Left lung (tissue), 14 donors: ENCODE measurements at regions of chr2 and their contacts with region 1.

Region 1: GRCh38 chr2:70789304-70790135 is 923 bp downstream of the FIGLA start:
- DNase-seq: peak; percentile 59 to 81 (median 66)
- ATAC-seq: peak; percentile 95
- H3K4me3 ChIP-seq: no peak overlapping the region
- H3K27ac ChIP-seq: no peak overlapping the region
- H3K4me1 ChIP-seq: peaks cover 0 to 23% of the 10 kb centered on the region in 2 donors
- H3K27me3 ChIP-seq: peaks cover 47 to 71% of the 10 kb centered on the region in 2 donors
- CTCF ChIP-seq: peak; percentile 30 to 49

Region 2: GRCh38 chr2:70472221-70472890 is 317.2 kb before region 1 on chr2:
- intact Hi-C with region 1: no loop called
- DNase-seq: peak in 1 of 4 donors; percentile 11
- ATAC-seq: peak; percentile 30
- H3K4me3 ChIP-seq: no peak overlapping the region
- H3K27ac ChIP-seq: no peak overlapping the region
- H3K4me1 ChIP-seq: peaks cover 0 to 27% of the 10 kb centered on the region in 2 donors
- H3K27me3 ChIP-seq: no peaks in the 10 kb centered on the region
- CTCF ChIP-seq: no peak

Region 3: DNA sequence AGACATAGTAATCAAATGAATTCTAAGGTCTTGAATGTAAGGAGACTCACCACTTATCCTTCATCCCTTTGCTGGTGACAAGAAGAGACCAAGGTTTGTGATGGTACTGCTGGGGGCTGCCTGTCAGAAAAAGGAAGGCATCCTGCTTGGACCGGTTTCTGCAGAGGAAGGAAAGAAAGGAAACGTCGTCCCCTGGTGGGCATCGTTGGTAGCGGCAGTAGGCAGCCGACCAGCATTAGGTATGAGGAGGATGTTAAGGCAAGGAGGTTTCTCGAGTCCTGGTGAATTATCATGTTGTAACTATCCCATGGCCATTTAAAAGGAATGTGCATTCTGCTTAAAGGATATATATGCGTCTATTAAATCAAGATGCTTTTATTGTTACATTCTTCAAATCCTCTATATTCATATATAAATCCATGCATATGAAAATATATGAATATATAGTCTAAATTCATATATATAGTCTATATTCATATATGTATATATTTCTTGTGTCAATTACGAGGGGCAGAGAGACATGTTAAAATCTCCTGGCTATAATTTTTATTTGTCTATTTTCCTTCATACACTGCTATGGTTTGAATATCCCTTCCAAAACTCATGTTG is 141.5 kb before region 1 on chr2:
- intact Hi-C with region 1: loop called in 1 of 2 experiments (anchors 5 kb)
- DNase-seq: peak in 3 of 4 donors; percentile 51 to 76 (median 63)
- ATAC-seq: peak; percentile 93
- H3K4me3 ChIP-seq: no peak overlapping the region
- H3K27ac ChIP-seq: no peak overlapping the region
- H3K4me1 ChIP-seq: no peaks in the 10 kb centered on the region
- H3K27me3 ChIP-seq: peaks cover 0 to 17% of the 10 kb centered on the region in 2 donors
- CTCF ChIP-seq: peak; percentile 87 to 98

Region 4: DNA sequence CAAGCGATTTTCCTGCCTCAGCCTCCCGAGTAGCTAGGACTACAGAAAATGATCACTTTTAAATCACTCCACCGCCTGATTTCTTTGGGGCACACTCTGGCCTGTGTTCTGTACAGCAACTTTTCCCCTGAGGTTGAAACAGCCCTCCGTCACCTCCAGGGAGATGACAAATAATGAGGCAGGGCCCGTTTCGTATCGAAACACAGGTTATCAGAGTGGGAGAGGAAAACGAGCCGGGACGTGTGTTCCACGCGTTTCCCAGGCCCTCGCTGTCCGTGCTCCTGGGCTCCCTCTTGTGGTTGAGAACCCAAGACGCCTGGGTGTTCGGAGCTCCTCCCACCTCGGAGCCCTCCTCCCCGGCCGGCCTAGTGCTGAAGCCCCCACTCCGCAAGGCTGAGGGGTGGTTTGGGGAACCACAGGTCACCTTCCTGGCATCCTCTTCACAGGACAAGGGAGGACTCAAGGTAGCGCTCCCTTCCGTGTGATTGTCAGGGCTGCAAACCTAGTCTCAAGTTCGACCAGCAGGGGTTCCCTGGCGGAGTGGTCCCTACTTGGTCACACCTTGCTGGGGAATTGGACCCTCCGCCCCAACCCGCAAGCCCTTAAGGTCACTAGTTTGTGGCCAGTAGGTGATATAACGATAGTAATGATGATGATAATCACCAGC is 158.9 kb after region 1 on chr2:
- intact Hi-C with region 1: loop called in 1 of 2 experiments (anchors 10 kb)
- DNase-seq: peak; percentile 74 to 90 (median 79)
- ATAC-seq: peak; percentile 98
- H3K4me3 ChIP-seq: no peak overlapping the region
- H3K27ac ChIP-seq: no peak overlapping the region
- H3K4me1 ChIP-seq: peaks cover 0 to 10% of the 10 kb centered on the region in 2 donors
- H3K27me3 ChIP-seq: peaks cover 10 to 47% of the 10 kb centered on the region in 2 donors
- CTCF ChIP-seq: peak; percentile 87 to 89

Region 5: DNA sequence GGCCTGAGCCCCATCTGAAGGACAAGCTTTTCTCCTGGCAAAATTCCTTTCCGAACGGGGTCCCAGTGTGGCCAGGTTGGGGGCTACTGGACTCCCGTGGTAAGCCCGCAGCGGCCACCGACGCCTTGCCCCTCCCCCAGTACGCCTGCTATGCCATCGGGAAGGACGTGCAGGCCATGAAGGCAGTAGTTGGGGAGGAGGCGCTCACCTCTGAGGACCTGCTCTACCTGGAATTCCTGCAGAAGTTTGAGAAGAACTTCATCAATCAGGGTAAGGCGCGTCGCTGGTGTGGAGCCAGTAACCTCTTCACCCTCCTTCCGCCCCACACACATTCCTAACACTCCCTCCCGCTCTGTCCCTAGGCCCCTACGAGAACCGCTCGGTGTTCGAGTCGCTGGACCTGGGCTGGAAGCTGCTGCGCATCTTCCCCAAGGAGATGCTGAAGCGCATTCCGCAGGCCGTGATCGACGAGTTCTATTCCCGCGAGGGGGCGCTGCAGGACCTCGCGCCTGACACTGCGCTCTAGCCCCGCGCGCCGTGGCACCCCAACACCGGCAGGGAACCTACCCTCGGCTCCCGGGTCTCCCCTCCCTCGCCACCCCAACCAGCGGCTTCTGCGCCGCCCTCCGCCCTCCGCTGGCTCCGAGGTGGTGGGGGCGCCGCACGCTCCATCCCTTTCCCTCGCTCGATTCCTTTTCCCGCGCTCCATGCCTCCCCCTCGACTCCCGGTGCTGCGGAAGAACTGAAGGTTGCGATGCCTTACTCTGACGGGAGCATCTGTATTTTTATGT is 175.3 kb after region 1 on chr2:
- intact Hi-C with region 1: no loop called
- DNase-seq: peak; percentile 49 to 90 (median 62)
- ATAC-seq: peak; percentile 90
- H3K4me3 ChIP-seq: peak overlapping the region; percentile 35 to 38
- H3K27ac ChIP-seq: no peak overlapping the region
- H3K4me1 ChIP-seq: peaks cover 0 to 9% of the 10 kb centered on the region in 2 donors
- H3K27me3 ChIP-seq: peaks cover 4 to 63% of the 10 kb centered on the region in 2 donors
- CTCF ChIP-seq: peak; percentile 64 to 78